Left colon (tissue), 2 donors: ENCODE measurements at regions of chr19 and their contacts with region 1.

Region 1: GRCh38 chr19:41872775-41873647 is 4.1 kb upstream of the CD79A start:
- DNase-seq: peak; percentile 75 to 88
- ATAC-seq: peak; percentile 85

Region 2: DNA sequence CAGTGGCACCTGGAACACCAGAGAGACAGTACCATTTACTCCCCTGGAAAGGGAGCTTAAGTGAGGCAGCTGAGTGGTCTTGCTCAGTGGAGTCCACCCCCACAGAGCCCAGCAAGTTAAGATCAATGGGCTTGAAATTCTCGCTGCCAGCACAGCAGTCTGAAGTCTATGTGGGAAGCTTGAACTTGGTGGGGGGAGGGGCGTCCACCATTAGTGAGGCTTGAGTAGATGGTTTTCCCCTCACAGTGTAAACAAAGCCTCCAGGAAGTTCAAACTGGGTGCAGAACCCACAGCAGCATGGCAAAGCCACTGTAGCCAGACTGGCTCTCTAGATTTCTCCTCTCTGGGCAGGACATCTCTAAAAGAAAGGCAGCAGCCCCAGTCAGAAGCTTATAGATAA is 215.9 kb before region 1 on chr19:
- intact Hi-C with region 1: no loop called
- DNase-seq: no peak
- ATAC-seq: no peak

Region 3: GRCh38 chr19:41934849-41935374 is 61.9 kb after region 1 on chr19:
- intact Hi-C with region 1: loop called in 1 of 2 experiments (anchors 10 kb)
- DNase-seq: peak; percentile 64 to 84
- ATAC-seq: peak; percentile 79

Region 4: DNA sequence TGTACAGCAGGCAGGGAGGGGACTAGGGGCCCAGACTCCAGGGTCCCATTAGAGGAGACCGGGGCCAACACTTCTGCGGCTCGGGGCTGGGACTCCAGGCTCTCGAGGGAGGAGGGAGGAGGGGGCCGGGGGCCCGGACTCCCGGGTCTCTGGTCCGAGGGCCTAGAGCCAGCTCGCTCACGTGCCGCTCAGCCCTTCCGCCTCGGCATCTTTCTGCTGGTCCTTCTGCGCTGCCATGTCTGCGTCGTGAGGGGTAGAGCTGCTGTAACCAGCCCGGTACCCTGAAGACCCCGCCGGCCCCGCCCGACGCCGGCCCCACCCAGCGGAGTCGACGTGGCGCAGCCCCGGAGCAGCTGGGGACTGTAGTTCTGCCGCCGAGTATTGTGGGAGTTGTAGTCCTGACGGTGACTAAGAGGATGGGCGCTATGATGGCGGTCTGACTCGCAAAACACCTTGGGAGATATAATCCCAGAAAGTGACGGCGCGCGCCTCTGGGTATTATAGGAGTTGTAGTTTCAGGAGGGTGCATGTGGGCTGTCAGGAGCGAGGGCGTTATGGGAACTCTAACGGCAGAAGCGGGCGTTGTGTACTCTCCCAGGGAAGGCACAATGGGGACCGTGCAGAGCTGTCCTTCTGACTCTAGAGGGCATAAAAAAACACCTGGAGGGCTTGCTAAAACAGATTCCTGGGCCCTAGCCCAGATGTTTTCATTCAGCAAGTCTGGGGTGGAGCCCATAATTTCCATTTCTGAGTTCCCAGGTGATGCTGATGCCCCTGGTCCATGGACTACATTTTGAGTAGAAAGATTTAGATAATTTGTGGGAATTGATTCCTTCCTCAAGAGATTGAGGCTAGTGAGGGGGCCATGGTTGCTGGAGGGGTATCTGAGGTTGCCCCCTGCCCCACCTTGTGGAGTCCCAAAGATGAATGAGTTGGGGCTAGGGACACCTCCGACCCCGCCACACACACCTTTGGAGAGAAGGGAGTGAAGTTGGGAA is 86.3 kb after region 1 on chr19 and contains the start of gene RABAC1:
- intact Hi-C with region 1: loop called in 1 of 2 experiments (anchors 10 kb)
- DNase-seq: peak; percentile 93
- ATAC-seq: peak; percentile 69
- total RNA-seq, gene RABAC1: 177 to 196 TPM